Caco-2 (cell line): ENCODE measurements at regions of chr5 and their contacts with region 1.

Region 1: GRCh38 chr5:157476702-157477408 is 16.8 kb downstream of the NIPAL4 start:
- DNase-seq: peak; percentile 56 to 67
- H3K4me3 ChIP-seq: no peak overlapping the region
- H3K4me3 Mint-ChIP-seq: no peak overlapping the region
- H3K27ac Mint-ChIP-seq: no peak overlapping the region
- H3K4me1 ChIP-seq: peaks cover 12% of the 10 kb centered on the region
- H3K4me1 Mint-ChIP-seq: peaks cover 26% of the 10 kb centered on the region
- H3K27me3 ChIP-seq: no peaks in the 10 kb centered on the region
- H3K27me3 Mint-ChIP-seq: no peaks in the 10 kb centered on the region
- CTCF ChIP-seq: peak; percentile 78 to 83

Region 2: GRCh38 chr5:157148734-157149615 is 327.9 kb before region 1 on chr5:
- CTCF ChIA-PET with region 1: interaction called, 4 read pairs
- POLR2A ChIA-PET with region 1: no interaction called
- intact Hi-C with region 1: loop called (anchors 5 kb)
- DNase-seq: peak; percentile 66 to 78
- H3K4me3 ChIP-seq: no peak overlapping the region
- H3K4me3 Mint-ChIP-seq: no peak overlapping the region
- H3K27ac Mint-ChIP-seq: no peak overlapping the region
- H3K4me1 ChIP-seq: no peaks in the 10 kb centered on the region
- H3K4me1 Mint-ChIP-seq: peaks cover 9% of the 10 kb centered on the region
- H3K27me3 ChIP-seq: no peaks in the 10 kb centered on the region
- H3K27me3 Mint-ChIP-seq: peaks cover 6% of the 10 kb centered on the region
- CTCF ChIP-seq: peak; percentile 78 to 88

Region 3: DNA sequence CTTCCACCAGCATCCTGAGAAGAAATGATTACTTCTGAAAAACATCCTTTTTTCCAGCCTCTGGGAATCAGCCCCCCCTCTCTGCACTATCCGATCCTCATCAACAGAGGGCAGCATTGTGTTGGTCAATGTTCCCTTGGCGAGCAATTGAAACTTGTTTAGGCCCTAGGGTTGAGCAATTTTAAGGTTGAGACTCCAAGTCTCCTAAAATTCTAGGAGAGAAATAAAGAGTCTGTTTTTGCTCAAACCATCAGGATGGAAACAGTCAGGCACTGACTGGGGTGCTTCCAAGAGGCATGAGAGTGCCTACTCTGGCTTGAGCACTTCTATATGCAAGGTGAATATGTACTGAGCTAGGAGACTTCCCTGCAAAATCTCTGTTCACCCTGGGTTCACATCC is 223.3 kb before region 1 on chr5:
- CTCF ChIA-PET with region 1: no interaction called
- POLR2A ChIA-PET with region 1: no interaction called
- intact Hi-C with region 1: loop called (anchors 1 kb)
- DNase-seq: peak in 1 of 2 experiments; percentile 70
- H3K4me3 ChIP-seq: no peak overlapping the region
- H3K4me3 Mint-ChIP-seq: no peak overlapping the region
- H3K27ac Mint-ChIP-seq: no peak overlapping the region
- H3K4me1 ChIP-seq: no peaks in the 10 kb centered on the region
- H3K4me1 Mint-ChIP-seq: no peaks in the 10 kb centered on the region
- H3K27me3 ChIP-seq: no peaks in the 10 kb centered on the region
- H3K27me3 Mint-ChIP-seq: peaks cover 8% of the 10 kb centered on the region
- CTCF ChIP-seq: peak; percentile 89 to 92

Region 4: GRCh38 chr5:157328277-157328912 is 148.5 kb before region 1 on chr5:
- CTCF ChIA-PET with region 1: interaction called, 16 read pairs
- POLR2A ChIA-PET with region 1: no interaction called
- intact Hi-C with region 1: loop called (anchors 1 kb)
- DNase-seq: peak; percentile 68 to 78
- H3K4me3 ChIP-seq: 0 out of 2 replicates have a peak overlapping the region, but pooled peaks have one; percentile 10
- H3K4me3 Mint-ChIP-seq: peak overlapping the region; percentile 39
- H3K27ac Mint-ChIP-seq: no peak overlapping the region
- H3K4me1 ChIP-seq: peaks cover 30% of the 10 kb centered on the region
- H3K4me1 Mint-ChIP-seq: peaks cover 21% of the 10 kb centered on the region
- H3K27me3 ChIP-seq: no peaks in the 10 kb centered on the region
- H3K27me3 Mint-ChIP-seq: no peaks in the 10 kb centered on the region
- CTCF ChIP-seq: peak; percentile 86 to 94

Region 5: DNA sequence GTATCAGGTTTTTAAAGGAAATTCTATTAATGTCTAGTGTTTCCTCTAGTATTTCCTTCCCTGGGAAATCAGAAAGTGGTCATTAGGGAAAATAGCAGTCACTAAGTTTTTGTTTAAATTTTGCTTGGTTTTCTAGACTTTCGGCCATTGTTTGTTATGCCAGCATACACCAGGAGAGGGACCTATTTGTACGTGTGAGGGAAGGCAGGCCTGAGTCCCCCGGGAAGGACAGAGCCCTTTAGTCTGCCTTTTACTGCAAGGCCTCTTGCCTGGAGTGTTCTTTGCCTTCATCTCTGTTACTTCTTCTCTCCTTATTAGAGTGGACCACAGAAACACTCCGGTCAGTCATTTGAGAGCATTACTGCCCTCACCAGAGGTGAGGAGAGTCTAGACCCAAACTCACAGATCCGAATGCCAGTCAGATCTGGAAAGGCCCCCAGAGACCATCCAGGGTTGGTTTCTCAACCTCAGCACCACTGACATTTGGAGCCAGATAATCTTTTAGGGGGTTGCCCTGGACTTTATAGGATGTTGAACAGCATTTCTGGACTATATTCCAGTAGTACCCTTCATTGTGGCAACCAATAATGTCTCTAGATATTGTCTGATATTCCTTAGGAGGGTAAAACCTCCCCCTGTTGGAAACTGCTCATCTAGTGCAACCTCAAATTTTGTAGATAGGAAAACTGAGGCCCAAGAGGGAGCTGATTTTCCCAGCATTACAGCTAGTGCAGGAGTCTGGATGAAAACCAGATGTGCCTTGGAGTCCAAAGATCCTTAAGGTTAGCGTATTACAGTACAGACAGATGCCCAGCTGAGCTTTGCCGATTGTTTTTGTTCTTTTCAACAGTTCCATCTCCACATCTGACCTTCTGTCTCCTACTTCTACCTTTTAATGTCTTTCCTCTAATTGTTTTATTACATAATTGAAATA is 109.8 kb before region 1 on chr5:
- CTCF ChIA-PET with region 1: interaction called, 3 read pairs
- POLR2A ChIA-PET with region 1: no interaction called
- intact Hi-C with region 1: loop called (anchors 1 kb)
- DNase-seq: peak in 1 of 2 experiments; percentile 47
- H3K4me3 ChIP-seq: no peak overlapping the region
- H3K4me3 Mint-ChIP-seq: no peak overlapping the region
- H3K27ac Mint-ChIP-seq: no peak overlapping the region
- H3K4me1 ChIP-seq: no peaks in the 10 kb centered on the region; the same call in 1 of the 2 replicates
- H3K4me1 Mint-ChIP-seq: no peaks in the 10 kb centered on the region
- H3K27me3 ChIP-seq: no peaks in the 10 kb centered on the region
- H3K27me3 Mint-ChIP-seq: no peaks in the 10 kb centered on the region
- CTCF ChIP-seq: peak in 1 of 2 experiments; percentile 69

Region 6: GRCh38 chr5:157400741-157401495 is 75.9 kb before region 1 on chr5:
- CTCF ChIA-PET with region 1: no interaction called
- POLR2A ChIA-PET with region 1: no interaction called
- intact Hi-C with region 1: no loop called
- DNase-seq: no peak
- H3K4me3 ChIP-seq: no peak overlapping the region
- H3K4me3 Mint-ChIP-seq: no peak overlapping the region
- H3K27ac Mint-ChIP-seq: no peak overlapping the region
- H3K4me1 ChIP-seq: no peaks in the 10 kb centered on the region
- H3K4me1 Mint-ChIP-seq: no peaks in the 10 kb centered on the region
- H3K27me3 ChIP-seq: no peaks in the 10 kb centered on the region; the same call in 1 of the 2 replicates
- H3K27me3 Mint-ChIP-seq: no peaks in the 10 kb centered on the region
- CTCF ChIP-seq: no peak

Region 7: DNA sequence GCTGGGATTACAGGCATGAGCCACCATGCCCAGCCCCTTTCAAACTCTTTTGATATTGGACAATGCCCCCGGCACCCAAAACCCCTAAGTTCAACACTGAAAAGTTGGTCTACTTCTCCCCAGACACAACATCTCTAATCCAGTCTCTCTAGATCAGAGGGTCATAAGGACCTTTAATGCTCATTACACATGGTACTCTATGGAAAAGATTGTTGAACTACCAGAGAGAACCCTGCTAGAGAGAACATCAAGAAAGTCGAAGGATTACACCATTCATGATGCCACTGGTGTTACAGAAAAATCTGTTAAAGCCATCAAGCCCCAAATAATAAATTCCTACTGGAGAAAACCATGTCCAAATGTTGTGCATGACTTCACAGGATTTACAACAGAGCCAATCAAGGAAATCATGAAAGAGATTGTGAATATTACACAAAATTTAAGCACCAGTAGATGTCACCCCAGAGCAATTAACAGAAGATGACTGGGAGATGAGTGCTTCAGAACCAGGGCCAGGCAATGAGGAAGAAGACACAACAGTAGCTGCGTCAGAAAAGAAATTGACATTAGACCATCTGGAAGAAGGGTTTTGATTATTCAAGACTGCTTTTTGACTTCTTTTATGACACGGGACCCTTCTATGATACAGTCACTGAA is 45.2 kb before region 1 on chr5:
- CTCF ChIA-PET with region 1: interaction called, 9 read pairs
- POLR2A ChIA-PET with region 1: no interaction called
- intact Hi-C with region 1: loop called (anchors 1 kb)
- DNase-seq: peak in 1 of 2 experiments; percentile 63
- H3K4me3 ChIP-seq: no peak overlapping the region
- H3K4me3 Mint-ChIP-seq: no peak overlapping the region
- H3K27ac Mint-ChIP-seq: no peak overlapping the region
- H3K4me1 ChIP-seq: no peaks in the 10 kb centered on the region
- H3K4me1 Mint-ChIP-seq: no peaks in the 10 kb centered on the region
- H3K27me3 ChIP-seq: no peaks in the 10 kb centered on the region
- H3K27me3 Mint-ChIP-seq: no peaks in the 10 kb centered on the region
- CTCF ChIP-seq: peak; percentile 56 to 60

Region 8: GRCh38 chr5:157718519-157718918 is 241.7 kb after region 1 on chr5:
- CTCF ChIA-PET with region 1: interaction called, 3 read pairs
- POLR2A ChIA-PET with region 1: no interaction called
- intact Hi-C with region 1: loop called (anchors 1 kb)
- DNase-seq: peak in 1 of 2 experiments; percentile 64
- H3K4me3 ChIP-seq: no peak overlapping the region
- H3K4me3 Mint-ChIP-seq: no peak overlapping the region
- H3K27ac Mint-ChIP-seq: peak overlapping the region; percentile 16
- H3K4me1 ChIP-seq: no peaks in the 10 kb centered on the region
- H3K4me1 Mint-ChIP-seq: no peaks in the 10 kb centered on the region
- H3K27me3 ChIP-seq: no peaks in the 10 kb centered on the region
- H3K27me3 Mint-ChIP-seq: no peaks in the 10 kb centered on the region
- CTCF ChIP-seq: peak; percentile 62 to 67